GM18951 (cell line): ENCODE measurements at regions of chr4 and their contacts with region 1.

Region 1: DNA sequence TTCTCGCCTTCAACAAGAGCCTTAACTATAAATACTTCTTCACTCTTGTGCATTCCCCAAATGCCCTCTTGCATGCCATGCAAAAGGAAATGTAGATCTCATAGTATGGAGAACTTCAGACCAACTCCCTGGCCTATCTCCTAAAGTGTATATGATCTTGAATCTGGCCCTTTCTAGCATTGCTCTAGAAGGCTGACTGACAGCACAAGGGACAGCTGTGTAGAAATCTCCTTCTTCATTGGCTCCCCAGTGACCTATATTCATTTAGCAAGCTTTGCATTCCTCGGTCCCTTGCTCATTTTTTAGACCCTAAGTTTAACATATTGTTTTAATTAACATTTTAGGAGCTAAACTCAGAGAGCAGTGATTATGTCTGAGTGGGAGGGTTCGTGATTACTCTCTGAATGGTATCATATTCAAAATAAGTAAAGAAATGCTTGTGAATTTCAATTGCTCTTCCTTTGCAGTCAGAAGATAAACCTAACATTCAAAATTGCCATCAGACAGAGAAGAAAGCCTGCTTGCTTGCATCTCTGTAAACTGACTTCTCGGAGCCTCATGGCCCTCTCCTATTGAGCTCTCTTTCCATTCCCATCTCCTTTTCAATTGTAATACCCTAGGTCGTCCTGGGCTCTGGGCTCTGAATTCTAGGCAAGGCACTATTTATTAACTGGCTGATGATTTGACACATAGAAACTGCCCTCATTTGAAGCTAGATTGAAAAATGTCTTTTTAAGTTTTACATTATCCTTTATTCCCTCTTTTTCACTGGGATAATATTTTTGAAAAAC is 120.3 kb upstream of the PRKG2 start:
- POLR2A ChIP-seq: no peak

Region 2: GRCh38 chr4:80365928-80366327 is 969.4 kb before region 1 on chr4:
- in situ Hi-C with region 1: loop called (anchors 25 kb)
- POLR2A ChIP-seq: no peak

Region 3: DNA sequence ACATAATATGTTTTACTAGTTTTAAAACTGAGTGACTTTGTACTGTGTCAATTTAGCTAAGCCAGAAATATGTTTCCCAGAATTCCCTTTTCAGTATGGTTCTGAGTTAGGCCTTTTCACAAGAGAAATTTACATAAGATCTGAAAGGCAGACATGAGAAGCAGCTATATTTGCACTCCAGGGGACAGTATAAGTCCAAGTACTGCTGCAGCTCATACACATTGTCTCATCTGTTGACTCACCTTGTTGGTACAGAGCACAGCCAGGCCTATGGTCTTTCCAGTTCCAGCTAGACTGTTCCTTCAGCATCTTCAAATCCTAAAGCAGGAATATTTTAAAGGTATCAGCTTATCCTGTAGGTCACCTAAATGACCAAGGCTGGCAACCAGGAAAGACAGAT is 251.3 kb before region 1 on chr4:
- in situ Hi-C with region 1: loop called (anchors 25 kb)
- POLR2A ChIP-seq: no peak